MCF 10A (cell line): ENCODE measurements at regions of chr3 and their contacts with region 1.

Region 1: GRCh38 chr3:184777336-184778004 is 34.5 kb upstream of the VPS8 start:
- DNase-seq: peak; percentile 87
- H3K4me3 Mint-ChIP-seq: no peak overlapping the region
- H3K27ac Mint-ChIP-seq: no peak overlapping the region
- H3K4me1 Mint-ChIP-seq: no peaks in the 10 kb centered on the region
- H3K27me3 Mint-ChIP-seq: no peaks in the 10 kb centered on the region
- CTCF ChIP-seq: peak; percentile 80

Region 2: GRCh38 chr3:184371570-184372018 is 405.9 kb before region 1 on chr3:
- CTCF ChIA-PET with region 1: interaction called, 4 read pairs
- POLR2A ChIA-PET with region 1: no interaction called
- intact Hi-C with region 1: loop called (anchors 10 kb)
- DNase-seq: peak; percentile 86
- H3K4me3 Mint-ChIP-seq: no peak overlapping the region
- H3K27ac Mint-ChIP-seq: no peak overlapping the region
- H3K4me1 Mint-ChIP-seq: peaks cover 11% of the 10 kb centered on the region
- H3K27me3 Mint-ChIP-seq: peaks cover 23% of the 10 kb centered on the region
- CTCF ChIP-seq: peak; percentile 94

Region 3: GRCh38 chr3:184459355-184459754 is 318.1 kb before region 1 on chr3:
- CTCF ChIA-PET with region 1: no interaction called
- POLR2A ChIA-PET with region 1: no interaction called
- intact Hi-C with region 1: no loop called
- DNase-seq: no peak
- H3K4me3 Mint-ChIP-seq: no peak overlapping the region
- H3K27ac Mint-ChIP-seq: no peak overlapping the region
- H3K4me1 Mint-ChIP-seq: no peaks in the 10 kb centered on the region
- H3K27me3 Mint-ChIP-seq: no peaks in the 10 kb centered on the region
- CTCF ChIP-seq: no peak

Region 4: GRCh38 chr3:184711493-184712247 is 65.8 kb before region 1 on chr3 and contains the start of gene MAGEF1:
- CTCF ChIA-PET with region 1: no interaction called
- POLR2A ChIA-PET with region 1: interaction called, 5 read pairs
- intact Hi-C with region 1: loop called (anchors 5 kb)
- DNase-seq: peak; percentile 77
- H3K4me3 Mint-ChIP-seq: peak within 1 kb of the TSS; percentile 84
- H3K27ac Mint-ChIP-seq: peak within 1 kb of the TSS; percentile 43
- H3K4me1 Mint-ChIP-seq: peaks cover 34% of the 10 kb centered on the region
- H3K27me3 Mint-ChIP-seq: no peaks in the 10 kb centered on the region
- CTCF ChIP-seq: no peak
- total RNA-seq, gene MAGEF1: 34.5 and 41.2 TPM in 2 replicates

Region 5: GRCh38 chr3:184740524-184741484 is 36.7 kb before region 1 on chr3:
- CTCF ChIA-PET with region 1: interaction called, 20 read pairs
- POLR2A ChIA-PET with region 1: interaction called, 7 read pairs
- intact Hi-C with region 1: no loop called
- DNase-seq: peak; percentile 96
- H3K4me3 Mint-ChIP-seq: peak overlapping the region; percentile 68
- H3K27ac Mint-ChIP-seq: peak overlapping the region; percentile 93
- H3K4me1 Mint-ChIP-seq: peaks cover 48% of the 10 kb centered on the region
- H3K27me3 Mint-ChIP-seq: no peaks in the 10 kb centered on the region
- CTCF ChIP-seq: no peak

Region 6: DNA sequence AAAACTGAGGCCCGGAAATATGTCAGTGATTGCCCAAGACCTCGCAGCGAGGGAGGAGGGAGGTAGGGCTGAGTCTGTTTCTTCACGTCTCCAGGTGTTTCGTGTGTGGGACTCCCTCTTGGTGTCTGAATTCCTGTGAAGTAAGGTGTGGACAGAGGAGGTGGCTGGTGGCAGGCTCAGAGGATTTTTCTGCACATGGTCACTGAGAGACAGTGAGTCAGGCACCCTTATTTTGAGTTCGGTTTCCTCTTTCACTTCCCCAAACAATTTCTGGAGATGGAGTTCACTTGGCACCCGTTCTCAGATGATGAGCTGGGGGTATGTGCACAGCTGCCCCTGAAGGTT is 11.8 kb before region 1 on chr3:
- CTCF ChIA-PET with region 1: interaction called, 26 read pairs
- POLR2A ChIA-PET with region 1: interaction called, 22 read pairs
- intact Hi-C with region 1: no loop called
- DNase-seq: peak; percentile 84
- H3K4me3 Mint-ChIP-seq: peak overlapping the region; percentile 59
- H3K27ac Mint-ChIP-seq: peak overlapping the region; percentile 89
- H3K4me1 Mint-ChIP-seq: peaks cover 31% of the 10 kb centered on the region
- H3K27me3 Mint-ChIP-seq: no peaks in the 10 kb centered on the region
- CTCF ChIP-seq: no peak

Region 7: DNA sequence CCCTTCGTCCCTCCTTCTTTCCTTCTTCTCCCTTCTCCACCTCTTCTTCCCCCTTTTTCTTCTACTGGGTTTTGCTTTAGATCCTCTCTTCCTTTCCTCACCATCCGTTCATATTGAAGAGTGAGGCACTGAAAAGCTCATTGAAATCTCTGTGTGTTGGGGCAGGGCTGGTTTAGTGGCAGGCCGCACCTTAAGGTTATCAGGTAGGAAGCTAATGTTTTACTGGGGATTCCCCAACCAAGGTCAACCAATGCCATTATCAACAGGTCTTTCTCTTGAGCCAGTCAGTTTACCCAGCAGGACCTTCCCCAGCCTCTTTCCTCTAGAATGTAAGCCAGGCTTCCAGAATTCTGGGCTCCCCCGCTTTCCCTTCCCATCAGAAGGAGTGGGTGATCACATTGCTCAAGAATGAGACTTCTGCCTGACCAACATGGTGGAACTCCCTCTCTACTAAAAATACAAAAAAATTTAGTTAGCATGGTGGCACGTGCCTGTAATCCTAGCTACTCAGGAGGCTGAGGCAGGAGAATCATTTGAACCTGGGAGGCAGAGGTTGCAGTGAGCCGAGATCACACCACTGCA is 23.0 kb after region 1 on chr3:
- CTCF ChIA-PET with region 1: interaction called, 32 read pairs
- POLR2A ChIA-PET with region 1: interaction called, 4 read pairs
- intact Hi-C with region 1: loop called (anchors 1 kb)
- DNase-seq: no peak
- H3K4me3 Mint-ChIP-seq: no peak overlapping the region
- H3K27ac Mint-ChIP-seq: no peak overlapping the region
- H3K4me1 Mint-ChIP-seq: peaks cover 8% of the 10 kb centered on the region
- H3K27me3 Mint-ChIP-seq: peaks cover 49% of the 10 kb centered on the region
- CTCF ChIP-seq: no peak